ENCODE measurements at regions of chr6 and their contacts with region 1.

Region 1: GRCh38 chr6:105374010-105374420 is 28.9 kb downstream of the PREP start:
- DNase-seq: peak; percentile 79
- H3K4me3 ChIP-seq: peak overlapping the region in 1 of 3 experiments; percentile 17
- H3K27ac ChIP-seq: peak overlapping the region; percentile 97
- H3K4me1 ChIP-seq: peaks cover 35% of the 10 kb centered on the region
- H3K27me3 ChIP-seq: no peaks in the 10 kb centered on the region
- CTCF ChIP-seq: peak in 1 of 2 donors; percentile 23

Region 2: DNA sequence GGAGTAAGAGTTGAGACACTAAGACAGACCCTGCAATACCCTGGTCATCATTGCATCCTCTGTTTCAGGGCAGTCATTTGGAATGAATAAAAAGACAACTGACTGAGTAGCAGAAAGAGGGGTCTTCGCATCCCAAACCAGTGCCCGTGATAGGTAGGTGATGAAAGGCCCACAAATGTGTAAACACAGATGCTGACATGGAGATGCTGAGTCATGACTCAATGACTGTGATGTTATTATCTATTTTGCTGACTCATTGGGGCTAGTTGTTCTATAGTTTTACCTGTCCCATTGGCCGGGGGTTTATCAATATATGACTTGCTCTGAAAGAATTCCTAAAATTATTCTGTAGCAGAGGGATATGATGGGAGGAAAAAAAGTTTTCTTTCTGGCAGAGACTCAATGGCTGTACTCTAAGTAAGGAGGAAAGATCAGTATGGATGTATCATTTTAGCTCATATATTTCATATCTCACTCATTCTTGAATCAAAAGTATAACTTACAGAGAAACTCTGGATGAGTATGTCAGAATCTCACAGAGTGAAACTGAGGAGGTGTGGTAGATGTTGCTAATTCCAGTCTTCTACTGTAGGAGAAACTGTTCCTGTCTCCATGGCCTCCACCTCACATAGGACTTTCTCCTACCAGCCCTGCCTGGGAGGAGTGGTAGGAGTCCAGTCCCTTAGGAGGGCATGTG is 148.8 kb after region 1 on chr6:
- CTCF ChIA-PET with region 1: no interaction called
- dilution Hi-C with region 1: no loop called
- in situ Hi-C with region 1: no loop called
- intact Hi-C with region 1: no loop called
- DNase-seq: peak; percentile 70
- H3K4me3 ChIP-seq: no peak overlapping the region
- H3K27ac ChIP-seq: peak overlapping the region; percentile 44
- H3K4me1 ChIP-seq: peaks cover 9% of the 10 kb centered on the region
- H3K27me3 ChIP-seq: no peaks in the 10 kb centered on the region
- CTCF ChIP-seq: no peak

Region 3: GRCh38 chr6:105591053-105591452 is 217.0 kb after region 1 on chr6:
- CTCF ChIA-PET with region 1: no interaction called
- dilution Hi-C with region 1: no loop called
- in situ Hi-C with region 1: no loop called
- intact Hi-C with region 1: loop called (anchors 5 kb)
- DNase-seq: peak; percentile 95
- H3K4me3 ChIP-seq: no peak overlapping the region
- H3K27ac ChIP-seq: peak overlapping the region; percentile 99
- H3K4me1 ChIP-seq: peaks cover 77% of the 10 kb centered on the region
- H3K27me3 ChIP-seq: no peaks in the 10 kb centered on the region
- CTCF ChIP-seq: no peak

Measured in mammary epithelial cell (primary cell).